ENCODE measurements at regions of chr17 and their contacts with region 1.

Region 1: DNA sequence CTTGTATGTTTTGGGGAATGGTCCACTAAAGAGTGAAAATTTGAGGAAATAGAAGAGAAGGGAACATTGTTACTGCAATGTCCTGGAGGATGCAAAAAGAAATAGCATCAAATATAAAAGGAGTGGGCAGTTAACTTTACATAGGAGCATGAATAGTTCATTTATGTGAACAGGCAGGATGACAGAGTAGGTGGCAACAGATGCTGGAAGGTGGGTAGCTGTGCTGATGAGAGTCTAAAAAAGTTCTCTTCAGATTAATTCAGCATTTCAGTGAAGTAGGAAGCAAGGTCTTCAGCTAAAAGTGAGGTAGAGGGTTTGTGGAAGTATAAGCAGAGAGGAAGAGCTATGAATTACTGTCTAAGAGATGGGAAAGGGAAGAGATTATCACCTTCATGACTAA is 276.5 kb downstream of the KIF2B start:
- DNase-seq: no peak
- ATAC-seq: no peak
- H3K4me3 ChIP-seq: no peak overlapping the region
- H3K27ac ChIP-seq: no peak overlapping the region
- H3K4me1 ChIP-seq: no peaks in the 10 kb centered on the region
- H3K27me3 ChIP-seq: no peaks in the 10 kb centered on the region
- CTCF ChIP-seq: no peak

Region 2: DNA sequence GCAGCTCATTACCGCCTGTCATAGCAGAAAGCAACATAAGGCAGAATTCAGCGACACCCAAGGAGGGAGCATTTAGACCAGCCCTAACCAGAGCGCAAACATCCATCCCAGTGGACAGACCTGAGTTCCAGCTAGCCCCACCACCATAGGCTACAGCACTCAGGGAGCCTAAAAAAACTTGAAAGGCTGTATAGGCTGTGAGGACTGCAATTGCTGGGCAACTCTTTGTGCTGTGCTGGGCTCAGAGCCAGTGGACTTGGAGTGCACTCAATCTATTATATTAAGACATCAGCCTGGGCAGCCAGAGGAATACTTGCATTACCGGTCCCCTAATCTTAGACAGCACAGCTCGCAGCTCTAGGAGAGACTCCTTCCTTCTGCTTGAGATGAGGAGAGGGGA is 69.2 kb before region 1 on chr17:
- CTCF ChIA-PET with region 1: no interaction called
- POLR2A ChIA-PET with region 1: no interaction called
- in situ Hi-C with region 1: no loop called
- intact Hi-C with region 1: loop called (anchors 10 kb)
- DNase-seq: no peak
- ATAC-seq: no peak
- H3K4me3 ChIP-seq: no peak overlapping the region
- H3K27ac ChIP-seq: no peak overlapping the region
- H3K4me1 ChIP-seq: no peaks in the 10 kb centered on the region
- H3K27me3 ChIP-seq: no peaks in the 10 kb centered on the region
- CTCF ChIP-seq: no peak

Region 3: DNA sequence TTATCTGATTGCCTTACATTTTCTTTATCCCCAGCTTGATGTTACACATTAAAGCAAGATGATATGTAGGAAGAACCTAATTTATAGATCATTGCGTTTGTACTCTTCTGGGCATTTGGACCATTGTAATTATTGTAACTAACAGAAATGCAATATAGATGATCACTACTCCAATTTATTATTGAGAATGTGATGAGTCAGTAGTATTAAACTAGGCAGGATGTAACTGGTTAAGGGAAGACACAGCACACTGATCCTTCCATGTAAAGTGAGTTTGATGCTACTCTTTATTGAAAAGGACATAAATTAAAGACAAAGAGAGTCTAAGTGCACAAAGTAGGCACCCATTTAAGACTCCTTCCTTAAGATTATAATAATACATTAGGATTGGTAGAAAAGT is 52.7 kb before region 1 on chr17:
- CTCF ChIA-PET with region 1: no interaction called
- POLR2A ChIA-PET with region 1: no interaction called
- in situ Hi-C with region 1: no loop called
- intact Hi-C with region 1: no loop called
- DNase-seq: no peak
- ATAC-seq: no peak
- H3K4me3 ChIP-seq: no peak overlapping the region
- H3K27ac ChIP-seq: no peak overlapping the region
- H3K4me1 ChIP-seq: no peaks in the 10 kb centered on the region
- H3K27me3 ChIP-seq: no peaks in the 10 kb centered on the region
- CTCF ChIP-seq: no peak